ENCODE measurements at regions of chr5 and their contacts with region 1.

Region 1: GRCh38 chr5:178146020-178146820 is 7.5 kb downstream of the NHP2 start:
- DNase-seq: peak; percentile 51 to 76 (median 68)
- ATAC-seq: peak; percentile 90
- H3K4me3 ChIP-seq: no peak overlapping the region
- H3K4me3 Mint-ChIP-seq: no peak overlapping the region
- H3K27ac ChIP-seq: no peak overlapping the region
- H3K27ac Mint-ChIP-seq: peak overlapping the region in 4 of 9 donors; percentile 6 to 68 (median 51)
- H3K4me1 ChIP-seq: no peaks in the 10 kb centered on the region
- H3K4me1 Mint-ChIP-seq: peaks cover 4 to 28% (median 14%) of the 10 kb centered on the region in 7 donors
- H3K27me3 ChIP-seq: no peaks in the 10 kb centered on the region
- H3K27me3 Mint-ChIP-seq: no peaks in the 10 kb centered on the region

Region 2: DNA sequence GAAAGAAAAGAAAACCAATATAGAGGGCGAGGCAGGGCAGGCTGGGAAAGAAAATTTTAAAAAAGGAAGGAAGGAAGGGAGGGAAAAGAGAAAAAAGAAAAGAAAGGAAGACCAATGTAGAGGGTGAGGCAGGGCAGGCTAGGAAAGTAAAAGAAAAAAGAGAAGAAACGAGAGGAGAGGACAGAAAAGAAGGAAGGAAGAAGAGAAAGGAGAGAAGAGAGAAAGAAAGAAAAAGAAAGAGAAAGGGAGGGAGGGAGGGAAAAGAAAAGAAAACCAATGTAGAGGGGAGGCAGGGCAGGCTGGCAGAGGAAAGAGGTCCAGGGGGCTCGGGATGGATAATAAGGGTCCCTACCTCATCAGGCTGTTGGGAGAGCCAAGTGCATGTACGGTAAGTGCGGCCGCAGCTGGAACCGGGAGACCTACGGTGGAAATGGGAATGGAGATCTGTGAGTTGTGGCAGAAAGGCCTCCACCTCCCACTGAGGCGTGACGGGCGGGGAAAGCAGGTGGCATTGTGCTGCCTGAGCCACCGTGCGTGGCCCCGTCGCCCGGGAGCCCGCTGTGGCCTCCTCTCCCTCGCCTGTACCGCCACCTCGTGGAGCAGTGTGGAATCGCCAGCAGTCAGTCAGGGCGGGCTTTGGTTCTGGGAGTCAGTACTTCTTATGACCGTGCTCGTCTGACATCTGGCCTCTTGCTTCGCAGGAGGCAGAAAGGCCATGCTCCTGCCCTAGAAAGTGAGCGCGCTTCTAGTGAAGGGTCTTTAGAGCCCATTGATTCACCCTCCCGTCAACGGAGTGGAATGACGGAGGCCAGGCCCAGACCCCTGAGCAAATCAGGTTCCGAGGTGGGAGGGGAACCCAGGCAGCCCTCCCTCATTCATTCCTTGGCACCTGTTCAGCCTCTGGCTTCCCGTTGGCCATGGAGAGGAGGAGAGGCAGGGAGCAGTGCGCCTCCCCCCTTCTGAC is 17.8 kb after region 1 on chr5:
- CTCF ChIA-PET with region 1: interaction called, 4 read pairs
- POLR2A ChIA-PET with region 1: no interaction called
- intact Hi-C with region 1: loop called in 1 of 2 experiments (anchors 1 kb)
- DNase-seq: peak; percentile 79 to 98 (median 92)
- ATAC-seq: peak; percentile 100
- H3K4me3 ChIP-seq: no peak overlapping the region
- H3K4me3 Mint-ChIP-seq: peak overlapping the region in 6 of 10 donors; percentile 27 to 69 (median 55)
- H3K27ac ChIP-seq: no peak overlapping the region
- H3K27ac Mint-ChIP-seq: no peak overlapping the region
- H3K4me1 ChIP-seq: peaks cover 0 to 3% of the 10 kb centered on the region in 2 donors
- H3K4me1 Mint-ChIP-seq: peaks cover 0 to 10% (median 8%) of the 10 kb centered on the region in 7 donors
- H3K27me3 ChIP-seq: no peaks in the 10 kb centered on the region
- H3K27me3 Mint-ChIP-seq: peaks cover 0 to 30% (median 9%) of the 10 kb centered on the region in 5 donors

Region 3: DNA sequence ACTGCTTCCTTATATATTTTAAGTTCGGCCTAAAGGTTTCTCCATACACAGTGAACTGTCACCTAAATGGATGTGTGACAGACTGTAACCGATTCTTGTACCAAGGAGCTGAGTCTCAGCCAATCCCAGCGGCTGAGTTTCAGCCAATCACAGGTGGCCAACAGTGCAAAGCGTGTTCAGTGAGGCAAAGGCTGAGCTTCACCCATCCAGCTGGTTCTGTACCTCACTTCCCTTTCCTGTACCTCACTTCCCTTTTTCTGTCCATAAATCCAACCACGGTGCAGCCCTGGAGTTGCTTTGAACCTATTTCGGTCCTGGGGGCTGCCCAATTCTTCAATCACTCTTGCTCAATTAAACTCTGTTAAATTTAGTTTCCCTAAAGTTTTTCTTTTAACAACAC is 1777.2 kb after region 1 on chr5:
- CTCF ChIA-PET with region 1: no interaction called
- POLR2A ChIA-PET with region 1: no interaction called
- intact Hi-C with region 1: no loop called
- DNase-seq: no peak
- ATAC-seq: peak; percentile 58
- H3K4me3 ChIP-seq: no peak overlapping the region
- H3K4me3 Mint-ChIP-seq: no peak overlapping the region
- H3K27ac ChIP-seq: no peak overlapping the region
- H3K27ac Mint-ChIP-seq: no peak overlapping the region
- H3K4me1 ChIP-seq: no peaks in the 10 kb centered on the region
- H3K4me1 Mint-ChIP-seq: no peaks in the 10 kb centered on the region
- H3K27me3 ChIP-seq: no peaks in the 10 kb centered on the region
- H3K27me3 Mint-ChIP-seq: peaks cover 0 to 3% (median 0%) of the 10 kb centered on the region in 5 donors

Measured in naive thymus-derived CD4-positive, alpha-beta T cell (primary cell).